ENCODE measurements at regions of chr6 and their contacts with region 1.

Region 1: GRCh38 chr6:85669735-85670194 is 27.1 kb upstream of the SYNCRIP start:
- DNase-seq: peak; percentile 69
- ATAC-seq: peak; percentile 85
- H3K4me3 Mint-ChIP-seq: peak overlapping the region; percentile 64
- H3K27ac Mint-ChIP-seq: peak overlapping the region; percentile 91
- H3K4me1 Mint-ChIP-seq: peaks cover 62% of the 10 kb centered on the region
- H3K27me3 Mint-ChIP-seq: no peaks in the 10 kb centered on the region
- CTCF ChIP-seq: no peak

Region 2: GRCh38 chr6:85593438-85594196 is 76.1 kb before region 1 on chr6 and contains the start of gene SNX14:
- CTCF ChIA-PET with region 1: no interaction called
- POLR2A ChIA-PET with region 1: interaction called, 13 read pairs
- intact Hi-C with region 1: no loop called
- DNase-seq: peak; percentile 88
- ATAC-seq: peak; percentile 84
- H3K4me3 Mint-ChIP-seq: peak within 1 kb of the TSS; percentile 99
- H3K27ac Mint-ChIP-seq: peak within 1 kb of the TSS; percentile 97
- H3K4me1 Mint-ChIP-seq: peaks cover 43% of the 10 kb centered on the region
- H3K27me3 Mint-ChIP-seq: no peaks in the 10 kb centered on the region
- CTCF ChIP-seq: no peak
- total RNA-seq, gene SNX14: 53.9 to 54.1 TPM

Region 3: GRCh38 chr6:85650606-85651005 is 19.2 kb before region 1 on chr6:
- CTCF ChIA-PET with region 1: interaction called, 4 read pairs
- POLR2A ChIA-PET with region 1: interaction called, 913 read pairs
- intact Hi-C with region 1: no loop called
- DNase-seq: no peak
- ATAC-seq: no peak
- H3K4me3 Mint-ChIP-seq: no peak overlapping the region
- H3K27ac Mint-ChIP-seq: no peak overlapping the region
- H3K4me1 Mint-ChIP-seq: peaks cover under 1% of the 10 kb centered on the region
- H3K27me3 Mint-ChIP-seq: no peaks in the 10 kb centered on the region
- CTCF ChIP-seq: no peak

Measured in activated CD8-positive, alpha-beta T cell treated with anti-CD3 and anti-CD28 coated beads for 36 hours (primary cell).